WTC11 (cell line): ENCODE measurements at regions of chr5 and their contacts with region 1.

Region 1: GRCh38 chr5:95794070-95794516 is 28.4 kb downstream of the GLRX start:
- DNase-seq: no peak
- ATAC-seq: no peak
- H3K4me3 Mint-ChIP-seq: no peak overlapping the region
- H3K27ac Mint-ChIP-seq: no peak overlapping the region; the same call in 1 of the 2 replicates
- H3K4me1 Mint-ChIP-seq: no peaks in the 10 kb centered on the region
- H3K27me3 Mint-ChIP-seq: no peaks in the 10 kb centered on the region
- CTCF ChIP-seq: no peak

Region 2: GRCh38 chr5:95646554-95647431 is 147.3 kb before region 1 on chr5 and contains the start of gene RFESD:
- CTCF ChIA-PET with region 1: no interaction called
- POLR2A ChIA-PET with region 1: no interaction called
- DNase-seq: peak; percentile 97
- ATAC-seq: peak; percentile 94
- H3K4me3 Mint-ChIP-seq: peak within 1 kb of the TSS; percentile 71
- H3K27ac Mint-ChIP-seq: peak within 1 kb of the TSS; percentile 57; the same call in 1 of the 2 replicates
- H3K4me1 Mint-ChIP-seq: 0 out of 2 replicates have a peak, but pooled peaks cover 7% of the 10 kb centered on the region
- H3K27me3 Mint-ChIP-seq: no peaks in the 10 kb centered on the region
- CTCF ChIP-seq: no peak
- total RNA-seq, gene RFESD: 2.7 to 5.7 TPM (median 4.5 TPM) in 3 replicates

Region 3: GRCh38 chr5:95822542-95823181 is 28.6 kb after region 1 on chr5 and contains the start of gene GLRX:
- CTCF ChIA-PET with region 1: no interaction called
- POLR2A ChIA-PET with region 1: no interaction called
- DNase-seq: peak; percentile 56
- ATAC-seq: peak; percentile 86
- H3K4me3 Mint-ChIP-seq: peak within 1 kb of the TSS; percentile 88
- H3K27ac Mint-ChIP-seq: peak within 1 kb of the TSS; percentile 90
- H3K4me1 Mint-ChIP-seq: peaks cover 50% of the 10 kb centered on the region
- H3K27me3 Mint-ChIP-seq: no peaks in the 10 kb centered on the region; the same call in 1 of the 2 replicates
- CTCF ChIP-seq: no peak
- total RNA-seq, gene GLRX: 15.9 to 21.0 TPM (median 19.2 TPM) in 3 replicates

Region 4: GRCh38 chr5:95846554-95847260 is 52.6 kb after region 1 on chr5:
- CTCF ChIA-PET with region 1: no interaction called
- POLR2A ChIA-PET with region 1: interaction called, 11 read pairs
- DNase-seq: peak; percentile 60
- ATAC-seq: peak; percentile 95
- H3K4me3 Mint-ChIP-seq: no peak overlapping the region
- H3K27ac Mint-ChIP-seq: no peak overlapping the region; the same call in 1 of the 2 replicates
- H3K4me1 Mint-ChIP-seq: peaks cover 2% of the 10 kb centered on the region; the same call in 1 of the 2 replicates
- H3K27me3 Mint-ChIP-seq: no peaks in the 10 kb centered on the region; the same call in 1 of the 2 replicates
- CTCF ChIP-seq: peak; percentile 83